ENCODE measurements at regions of chr1 and their contacts with region 1.

Region 1: GRCh38 chr1:9558271-9558945 is 19.1 kb downstream of the SLC25A33 start:
- DNase-seq: no peak
- ATAC-seq: no peak

Region 2: DNA sequence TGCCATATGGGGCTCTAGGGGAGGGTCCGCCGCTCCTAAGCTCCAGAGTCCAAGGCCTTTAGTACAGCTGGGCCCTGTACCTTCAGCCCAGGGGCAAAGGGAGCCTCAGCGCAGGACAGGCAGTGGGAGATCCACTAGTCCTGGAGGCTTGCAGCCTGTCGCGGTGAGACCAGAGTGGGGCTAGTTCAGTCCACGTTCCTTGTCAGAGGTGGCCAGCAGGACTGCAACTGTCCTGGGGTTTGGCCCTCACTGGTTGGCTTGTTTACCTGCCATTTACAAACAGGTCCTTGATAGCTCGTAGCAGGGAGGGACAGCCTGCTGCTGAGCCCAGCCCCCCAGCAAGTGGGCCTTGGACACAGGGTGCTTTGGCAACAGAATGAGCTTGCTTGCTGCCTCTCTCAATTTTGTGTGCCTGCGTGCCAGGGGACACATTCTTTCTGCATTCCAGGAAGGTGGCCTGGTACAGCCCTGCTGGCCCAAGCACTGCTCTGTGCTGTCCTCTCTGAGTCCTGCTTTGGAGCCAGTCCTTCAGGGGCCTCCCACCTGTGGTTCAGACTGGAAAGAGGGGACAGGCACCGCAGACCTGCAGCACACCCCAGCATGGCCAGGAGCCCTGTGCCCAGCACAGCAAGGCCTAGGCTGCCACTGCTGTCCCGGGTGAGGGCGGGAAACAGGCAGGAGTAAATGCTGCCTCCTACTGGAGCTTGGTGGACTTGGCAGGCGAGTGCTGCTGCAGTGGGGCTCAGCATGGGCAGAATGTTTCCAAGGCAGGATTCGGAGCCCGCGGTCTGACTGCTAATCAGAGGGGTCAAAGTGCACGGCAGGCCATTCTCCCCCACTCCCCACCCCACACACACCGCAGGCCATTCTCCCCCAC is 308.6 kb before region 1 on chr1:
- intact Hi-C with region 1: loop called (anchors 5 kb)
- DNase-seq: peak; percentile 79
- ATAC-seq: peak; percentile 63

Region 3: GRCh38 chr1:9413148-9413876 is 145.1 kb before region 1 on chr1:
- intact Hi-C with region 1: no loop called
- DNase-seq: no peak
- ATAC-seq: peak; percentile 83